Caco-2 (cell line): ENCODE measurements at regions of chr17 and their contacts with region 1.

Region 1: GRCh38 chr17:5468075-5468473 is 708 bp downstream of the DHX33 start:
- DNase-seq: no peak
- H3K4me3 ChIP-seq: peak overlapping the region; percentile 76
- H3K4me3 Mint-ChIP-seq: peak overlapping the region; percentile 91
- H3K27ac Mint-ChIP-seq: peak overlapping the region; percentile 46
- H3K4me1 ChIP-seq: no peaks in the 10 kb centered on the region
- H3K4me1 Mint-ChIP-seq: peaks cover 14% of the 10 kb centered on the region
- H3K27me3 ChIP-seq: no peaks in the 10 kb centered on the region
- H3K27me3 Mint-ChIP-seq: no peaks in the 10 kb centered on the region
- CTCF ChIP-seq: no peak

Region 2: GRCh38 chr17:5486204-5487124 is 18.4 kb after region 1 on chr17 and contains the start of gene MIS12:
- CTCF ChIA-PET with region 1: interaction called, 3 read pairs
- POLR2A ChIA-PET with region 1: interaction called, 10 read pairs
- intact Hi-C with region 1: loop called (anchors 1 kb)
- DNase-seq: peak; percentile 90 to 96
- H3K4me3 ChIP-seq: peak within 1 kb of the TSS; percentile 80
- H3K4me3 Mint-ChIP-seq: peak within 1 kb of the TSS; percentile 90
- H3K27ac Mint-ChIP-seq: peak within 1 kb of the TSS; percentile 90
- H3K4me1 ChIP-seq: 0 out of 2 replicates have a peak, but pooled peaks cover 3% of the 10 kb centered on the region
- H3K4me1 Mint-ChIP-seq: no peaks in the 10 kb centered on the region
- H3K27me3 ChIP-seq: no peaks in the 10 kb centered on the region
- H3K27me3 Mint-ChIP-seq: no peaks in the 10 kb centered on the region
- CTCF ChIP-seq: no peak
- total RNA-seq, gene MIS12: 11.7 and 13.9 TPM in 2 replicates

Region 3: DNA sequence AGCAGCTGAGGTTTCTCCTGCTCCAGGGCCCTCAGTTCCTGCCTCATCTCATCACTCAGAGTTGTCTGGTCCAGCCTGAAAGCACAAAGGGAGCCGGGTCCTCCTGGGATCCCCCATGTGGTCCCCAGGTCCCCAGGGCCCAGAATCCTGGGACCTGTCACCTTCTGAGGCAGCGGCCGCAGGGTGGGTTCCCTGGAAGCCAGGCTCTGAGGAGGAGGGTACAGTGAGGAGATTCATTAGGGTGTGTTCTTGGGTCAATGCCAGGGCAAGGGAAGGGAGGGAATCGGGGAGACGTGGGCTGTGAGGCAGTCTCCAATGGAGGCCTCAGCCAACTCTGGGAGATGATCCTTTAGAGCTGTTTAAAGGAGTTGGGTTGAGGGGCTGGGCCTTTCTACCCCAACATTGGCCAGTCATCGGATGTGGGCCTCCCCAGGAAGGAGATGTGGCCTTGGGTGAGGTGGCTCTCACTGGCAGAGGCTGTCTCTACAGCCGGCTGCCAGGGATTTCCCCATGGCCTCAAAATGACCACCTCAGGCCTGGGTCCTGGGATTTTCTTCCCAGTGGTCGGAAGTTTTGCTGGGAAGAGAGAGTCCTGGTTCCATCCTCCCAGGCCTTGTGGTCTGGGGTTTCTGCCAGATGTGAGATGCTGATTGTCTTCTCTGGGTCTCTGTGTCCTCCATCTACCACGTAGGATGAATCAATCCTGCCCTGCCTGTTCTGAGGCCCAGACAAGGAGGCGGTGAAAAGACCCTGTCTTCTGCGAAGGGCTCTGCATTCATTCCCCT is 69.0 kb after region 1 on chr17:
- CTCF ChIA-PET with region 1: no interaction called
- POLR2A ChIA-PET with region 1: no interaction called
- intact Hi-C with region 1: no loop called
- DNase-seq: no peak
- H3K4me3 ChIP-seq: no peak overlapping the region
- H3K4me3 Mint-ChIP-seq: no peak overlapping the region
- H3K27ac Mint-ChIP-seq: no peak overlapping the region
- H3K4me1 ChIP-seq: no peaks in the 10 kb centered on the region
- H3K4me1 Mint-ChIP-seq: no peaks in the 10 kb centered on the region
- H3K27me3 ChIP-seq: no peaks in the 10 kb centered on the region
- H3K27me3 Mint-ChIP-seq: no peaks in the 10 kb centered on the region
- CTCF ChIP-seq: no peak